Lower lobe of right lung (tissue), 2 donors: ENCODE measurements at regions of chr6 and their contacts with region 1.

Region 1: GRCh38 chr6:89599727-89600126 is 38.8 kb downstream of the LYRM2 start:
- DNase-seq: no peak
- ATAC-seq: no peak
- H3K4me3 ChIP-seq: no peak overlapping the region
- H3K27ac ChIP-seq: no peak overlapping the region
- H3K4me1 ChIP-seq: no peaks in the 10 kb centered on the region
- H3K27me3 ChIP-seq: no peaks in the 10 kb centered on the region
- CTCF ChIP-seq: no peak

Region 2: GRCh38 chr6:89058627-89059026 is 541.1 kb before region 1 on chr6:
- intact Hi-C with region 1: no loop called
- DNase-seq: no peak
- ATAC-seq: no peak
- H3K4me3 ChIP-seq: no peak overlapping the region
- H3K27ac ChIP-seq: no peak overlapping the region
- H3K4me1 ChIP-seq: no peaks in the 10 kb centered on the region
- H3K27me3 ChIP-seq: no peaks in the 10 kb centered on the region
- CTCF ChIP-seq: no peak

Region 3: GRCh38 chr6:89432875-89433251 is 166.9 kb before region 1 on chr6 and contains the start of gene ANKRD6:
- intact Hi-C with region 1: loop called (anchors 10 kb)
- DNase-seq: peak; percentile 88
- ATAC-seq: peak; percentile 97 to 99
- H3K4me3 ChIP-seq: peak within 1 kb of the TSS; percentile 82
- H3K27ac ChIP-seq: peak within 1 kb of the TSS; percentile 67
- H3K4me1 ChIP-seq: peaks cover 25% of the 10 kb centered on the region
- H3K27me3 ChIP-seq: no peaks in the 10 kb centered on the region
- CTCF ChIP-seq: peak; percentile 85
- total RNA-seq, gene ANKRD6: 17.7 TPM

Region 4: GRCh38 chr6:89977808-89978748 is 378.4 kb after region 1 on chr6:
- intact Hi-C with region 1: no loop called
- DNase-seq: no peak
- ATAC-seq: no peak
- H3K4me3 ChIP-seq: no peak overlapping the region
- H3K27ac ChIP-seq: no peak overlapping the region
- H3K4me1 ChIP-seq: no peaks in the 10 kb centered on the region
- H3K27me3 ChIP-seq: no peaks in the 10 kb centered on the region
- CTCF ChIP-seq: no peak